ENCODE measurements at regions of chr4 and their contacts with region 1.

Region 1: GRCh38 chr4:142339053-142339452 is 507.0 kb downstream of the INPP4B start:
- DNase-seq: no peak
- H3K4me3 ChIP-seq: no peak overlapping the region
- H3K27ac ChIP-seq: no peak overlapping the region
- H3K4me1 ChIP-seq: no peaks in the 10 kb centered on the region
- H3K27me3 ChIP-seq: no peaks in the 10 kb centered on the region
- CTCF ChIP-seq: no peak
- EP300 ChIP-seq: no peak
- POLR2A ChIP-seq: no peak

Region 2: GRCh38 chr4:141719585-141719984 is 619.5 kb before region 1 on chr4:
- in situ Hi-C with region 1: no loop called
- intact Hi-C with region 1: loop called (anchors 5 kb)
- DNase-seq: no peak
- H3K4me3 ChIP-seq: no peak overlapping the region
- H3K27ac ChIP-seq: no peak overlapping the region
- H3K4me1 ChIP-seq: no peaks in the 10 kb centered on the region
- H3K27me3 ChIP-seq: no peaks in the 10 kb centered on the region
- CTCF ChIP-seq: no peak
- EP300 ChIP-seq: no peak
- POLR2A ChIP-seq: no peak